ENCODE measurements at regions of chr7 and their contacts with region 1.

Region 1: GRCh38 chr7:11060893-11061292 is 87.2 kb downstream of the PHF14 start:
- DNase-seq: no peak
- ATAC-seq: no peak
- H3K4me3 ChIP-seq: no peak overlapping the region
- H3K4me3 Mint-ChIP-seq: no peak overlapping the region
- H3K27ac ChIP-seq: no peak overlapping the region
- H3K27ac Mint-ChIP-seq: no peak overlapping the region
- H3K4me1 ChIP-seq: no peaks in the 10 kb centered on the region
- H3K4me1 Mint-ChIP-seq: no peaks in the 10 kb centered on the region
- H3K27me3 ChIP-seq: no peaks in the 10 kb centered on the region
- H3K27me3 Mint-ChIP-seq: no peaks in the 10 kb centered on the region

Region 2: GRCh38 chr7:11078247-11078834 is 17.4 kb after region 1 on chr7:
- CTCF ChIA-PET with region 1: no interaction called
- POLR2A ChIA-PET with region 1: interaction called in 1 of 2 experiments, 11 read pairs
- DNase-seq: no peak
- ATAC-seq: no peak
- H3K4me3 ChIP-seq: no peak overlapping the region
- H3K4me3 Mint-ChIP-seq: no peak overlapping the region
- H3K27ac ChIP-seq: no peak overlapping the region
- H3K27ac Mint-ChIP-seq: no peak overlapping the region
- H3K4me1 ChIP-seq: no peaks in the 10 kb centered on the region
- H3K4me1 Mint-ChIP-seq: peaks cover 0 to 2% (median 2%) of the 10 kb centered on the region in 3 donors
- H3K27me3 ChIP-seq: no peaks in the 10 kb centered on the region
- H3K27me3 Mint-ChIP-seq: no peaks in the 10 kb centered on the region

Region 3: DNA sequence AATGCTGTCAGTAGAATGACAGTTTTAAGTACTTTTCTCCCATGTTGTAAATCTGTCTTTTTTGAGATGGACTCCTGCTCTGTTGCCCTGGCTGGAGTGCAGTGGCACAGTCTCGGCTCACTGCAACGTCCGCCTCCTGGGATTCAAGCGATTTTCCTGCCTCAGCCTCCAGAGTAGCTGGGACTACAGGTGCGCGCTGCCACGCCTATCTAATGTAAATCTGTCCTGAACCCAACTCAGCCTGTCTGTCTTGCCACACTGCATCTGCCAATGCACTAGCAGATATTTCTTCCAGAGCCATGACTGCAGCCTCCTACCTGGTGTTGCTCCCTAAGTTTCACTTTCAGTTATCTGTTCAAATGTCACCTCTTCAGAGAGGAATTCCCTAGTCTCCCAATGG is 176.8 kb after region 1 on chr7:
- CTCF ChIA-PET with region 1: no interaction called
- POLR2A ChIA-PET with region 1: no interaction called
- DNase-seq: no peak
- ATAC-seq: no peak
- H3K4me3 ChIP-seq: no peak overlapping the region
- H3K4me3 Mint-ChIP-seq: no peak overlapping the region
- H3K27ac ChIP-seq: no peak overlapping the region
- H3K27ac Mint-ChIP-seq: no peak overlapping the region
- H3K4me1 ChIP-seq: no peaks in the 10 kb centered on the region
- H3K4me1 Mint-ChIP-seq: no peaks in the 10 kb centered on the region
- H3K27me3 ChIP-seq: no peaks in the 10 kb centered on the region
- H3K27me3 Mint-ChIP-seq: peaks cover 0 to 1% of the 10 kb centered on the region in 2 donors

Measured in T-cell (primary cell).